A673 (cell line): ENCODE measurements at regions of chr5 and their contacts with region 1.

Region 1: GRCh38 chr5:139968547-139969261 is 74.4 kb downstream of the NRG2 start:
- DNase-seq: peak; percentile 86
- H3K4me3 ChIP-seq: no peak overlapping the region
- H3K27ac ChIP-seq: no peak overlapping the region
- H3K4me1 ChIP-seq: no peaks in the 10 kb centered on the region
- H3K27me3 ChIP-seq: no peaks in the 10 kb centered on the region
- CTCF ChIP-seq: peak; percentile 100

Region 2: DNA sequence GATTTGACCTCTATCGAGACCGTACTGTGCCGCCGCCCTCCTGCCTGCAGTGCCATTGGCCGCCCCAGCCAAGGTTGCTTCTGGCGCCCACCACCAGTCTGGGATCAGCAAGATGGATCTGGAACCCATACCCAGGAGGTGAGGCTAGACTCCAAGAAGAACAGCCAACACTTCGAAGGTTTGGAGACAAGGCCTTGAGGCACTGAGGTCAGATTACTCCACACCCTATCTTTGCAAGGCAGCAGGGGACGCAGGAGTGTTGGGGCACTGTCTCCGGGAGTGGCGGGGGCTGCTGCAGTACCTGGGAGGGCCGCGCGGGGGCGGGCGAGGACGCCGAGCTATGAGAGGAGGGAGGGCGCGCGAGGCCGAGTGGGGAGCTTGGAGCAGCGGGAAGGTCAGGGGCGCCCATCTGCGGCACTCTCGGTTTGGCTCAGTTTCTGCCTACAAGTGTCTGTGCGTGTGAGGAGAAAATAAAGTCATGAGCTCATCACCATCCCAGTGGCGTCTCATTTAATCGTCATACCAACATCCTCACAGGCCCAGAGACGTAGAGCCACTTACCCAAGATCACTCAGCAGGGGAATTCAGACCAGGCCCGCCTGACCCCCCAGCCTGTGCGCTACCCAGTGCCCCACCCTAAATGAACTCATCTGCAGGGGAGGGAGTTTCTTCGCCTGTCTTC is 193.6 kb before region 1 on chr5:
- CTCF ChIA-PET with region 1: interaction called, 10 read pairs
- POLR2A ChIA-PET with region 1: no interaction called
- intact Hi-C with region 1: no loop called
- DNase-seq: peak; percentile 78
- H3K4me3 ChIP-seq: no peak overlapping the region
- H3K27ac ChIP-seq: no peak overlapping the region
- H3K4me1 ChIP-seq: no peaks in the 10 kb centered on the region
- H3K27me3 ChIP-seq: no peaks in the 10 kb centered on the region
- CTCF ChIP-seq: peak; percentile 97

Region 3: GRCh38 chr5:139787568-139788293 is 181.0 kb before region 1 on chr5:
- CTCF ChIA-PET with region 1: interaction called, 51 read pairs
- POLR2A ChIA-PET with region 1: no interaction called
- intact Hi-C with region 1: loop called (anchors 1 kb)
- DNase-seq: peak; percentile 89
- H3K4me3 ChIP-seq: peak overlapping the region; percentile 55
- H3K27ac ChIP-seq: peak overlapping the region; percentile 16
- H3K4me1 ChIP-seq: no peaks in the 10 kb centered on the region
- H3K27me3 ChIP-seq: no peaks in the 10 kb centered on the region
- CTCF ChIP-seq: peak; percentile 92

Region 4: DNA sequence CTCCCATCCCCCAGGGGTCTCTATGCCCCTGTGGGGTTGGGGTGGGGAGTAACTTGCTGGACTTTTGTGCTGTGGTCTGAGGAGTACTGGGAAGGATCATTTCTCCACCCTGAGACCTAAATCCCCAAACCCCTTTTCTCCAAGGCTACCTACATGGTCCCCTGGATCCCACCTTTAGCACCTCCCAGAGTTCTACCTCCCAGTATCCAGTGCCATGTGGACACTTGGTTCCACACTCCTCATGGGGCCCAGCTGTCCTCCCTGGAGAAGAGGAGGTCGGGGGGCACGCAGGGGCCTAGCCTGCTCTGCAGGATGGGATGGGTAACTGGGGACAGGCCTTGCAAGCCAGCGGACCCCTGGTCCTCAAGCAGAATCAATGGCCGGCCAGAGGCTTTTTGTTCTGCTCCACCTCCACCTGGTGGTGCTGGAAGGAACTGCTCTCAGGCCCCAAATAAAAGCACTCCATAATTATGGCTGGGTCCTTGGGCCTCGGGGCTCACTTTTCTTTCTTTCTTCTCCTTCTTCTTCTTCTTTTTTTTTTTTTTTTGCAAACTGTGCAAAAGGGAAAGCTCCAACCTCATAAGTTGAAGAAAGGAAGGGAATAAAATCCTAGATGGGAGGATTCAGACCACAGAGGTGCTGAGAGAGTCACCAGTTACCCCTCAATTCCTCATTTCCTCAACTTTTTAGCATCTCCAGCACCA is 104.7 kb before region 1 on chr5:
- CTCF ChIA-PET with region 1: interaction called, 3 read pairs
- POLR2A ChIA-PET with region 1: no interaction called
- intact Hi-C with region 1: loop called (anchors 2 kb)
- DNase-seq: peak; percentile 67
- H3K4me3 ChIP-seq: no peak overlapping the region
- H3K27ac ChIP-seq: no peak overlapping the region
- H3K4me1 ChIP-seq: no peaks in the 10 kb centered on the region
- H3K27me3 ChIP-seq: peaks cover 4% of the 10 kb centered on the region
- CTCF ChIP-seq: peak; percentile 89

Region 5: DNA sequence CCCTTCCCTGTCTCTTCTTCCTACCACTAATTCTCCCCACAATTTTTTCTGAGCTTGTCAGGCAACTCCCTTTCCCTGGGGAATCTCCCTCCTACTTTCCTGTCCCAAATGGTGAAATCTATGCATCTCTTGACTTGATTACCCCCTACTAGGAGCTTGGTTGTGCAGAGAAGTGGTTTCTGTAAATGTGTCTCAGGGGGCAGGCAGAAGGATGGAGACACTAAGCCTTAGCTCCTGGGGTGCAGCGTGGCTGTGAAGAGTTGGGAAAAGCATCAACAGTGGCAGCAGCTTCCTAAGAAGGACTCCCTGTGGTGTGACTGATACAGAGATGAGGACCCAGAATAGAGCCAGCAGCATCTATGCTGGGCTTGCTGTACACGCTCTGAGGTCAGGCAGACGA is 12.1 kb after region 1 on chr5:
- CTCF ChIA-PET with region 1: interaction called, 11 read pairs
- POLR2A ChIA-PET with region 1: no interaction called
- intact Hi-C with region 1: no loop called
- DNase-seq: peak; percentile 77
- H3K4me3 ChIP-seq: no peak overlapping the region
- H3K27ac ChIP-seq: no peak overlapping the region
- H3K4me1 ChIP-seq: peaks cover 12% of the 10 kb centered on the region
- H3K27me3 ChIP-seq: peaks cover 6% of the 10 kb centered on the region
- CTCF ChIP-seq: no peak

Region 6: GRCh38 chr5:140157032-140157803 is 188.5 kb after region 1 on chr5:
- CTCF ChIA-PET with region 1: no interaction called
- POLR2A ChIA-PET with region 1: no interaction called
- intact Hi-C with region 1: loop called (anchors 10 kb)
- DNase-seq: peak; percentile 92
- H3K4me3 ChIP-seq: peak overlapping the region; percentile 33
- H3K27ac ChIP-seq: no peak overlapping the region
- H3K4me1 ChIP-seq: peaks cover 6% of the 10 kb centered on the region
- H3K27me3 ChIP-seq: no peaks in the 10 kb centered on the region
- CTCF ChIP-seq: peak; percentile 95